A673 (cell line): ENCODE measurements at regions of chr13 and their contacts with region 1.

Region 1: GRCh38 chr13:77779552-77780272 is 82.2 kb downstream of the SLAIN1 start:
- DNase-seq: peak; percentile 78
- H3K4me3 ChIP-seq: no peak overlapping the region
- H3K27ac ChIP-seq: no peak overlapping the region
- H3K4me1 ChIP-seq: peaks cover 14% of the 10 kb centered on the region
- H3K27me3 ChIP-seq: no peaks in the 10 kb centered on the region
- CTCF ChIP-seq: peak; percentile 77

Region 2: GRCh38 chr13:77415253-77416071 is 364.2 kb before region 1 on chr13:
- CTCF ChIA-PET with region 1: no interaction called
- POLR2A ChIA-PET with region 1: no interaction called
- intact Hi-C with region 1: no loop called
- DNase-seq: no peak
- H3K4me3 ChIP-seq: no peak overlapping the region
- H3K27ac ChIP-seq: no peak overlapping the region
- H3K4me1 ChIP-seq: no peaks in the 10 kb centered on the region
- H3K27me3 ChIP-seq: no peaks in the 10 kb centered on the region
- CTCF ChIP-seq: no peak

Region 3: GRCh38 chr13:77918391-77919245 is 138.9 kb after region 1 on chr13 and contains the start of gene EDNRB:
- CTCF ChIA-PET with region 1: no interaction called
- POLR2A ChIA-PET with region 1: no interaction called
- intact Hi-C with region 1: loop called (anchors 5 kb)
- DNase-seq: peak; percentile 81
- H3K4me3 ChIP-seq: peak within 1 kb of the TSS; percentile 33
- H3K27ac ChIP-seq: no peak within 1 kb of the TSS
- H3K4me1 ChIP-seq: peaks cover 5% of the 10 kb centered on the region
- H3K27me3 ChIP-seq: peaks cover 72% of the 10 kb centered on the region
- CTCF ChIP-seq: peak; percentile 28; the same call in 1 of the 2 replicates
- total RNA-seq, gene EDNRB: 0.07 and 0.13 TPM in 2 replicates

Region 4: GRCh38 chr13:78121459-78122348 is 342.0 kb after region 1 on chr13:
- CTCF ChIA-PET with region 1: interaction called, 4 read pairs
- POLR2A ChIA-PET with region 1: interaction called, 3 read pairs
- intact Hi-C with region 1: loop called (anchors 1 kb)
- DNase-seq: peak; percentile 84
- H3K4me3 ChIP-seq: no peak overlapping the region
- H3K27ac ChIP-seq: no peak overlapping the region
- H3K4me1 ChIP-seq: no peaks in the 10 kb centered on the region
- H3K27me3 ChIP-seq: no peaks in the 10 kb centered on the region
- CTCF ChIP-seq: peak; percentile 91